ENCODE measurements at regions of chr11 and their contacts with region 1.

Region 1: DNA sequence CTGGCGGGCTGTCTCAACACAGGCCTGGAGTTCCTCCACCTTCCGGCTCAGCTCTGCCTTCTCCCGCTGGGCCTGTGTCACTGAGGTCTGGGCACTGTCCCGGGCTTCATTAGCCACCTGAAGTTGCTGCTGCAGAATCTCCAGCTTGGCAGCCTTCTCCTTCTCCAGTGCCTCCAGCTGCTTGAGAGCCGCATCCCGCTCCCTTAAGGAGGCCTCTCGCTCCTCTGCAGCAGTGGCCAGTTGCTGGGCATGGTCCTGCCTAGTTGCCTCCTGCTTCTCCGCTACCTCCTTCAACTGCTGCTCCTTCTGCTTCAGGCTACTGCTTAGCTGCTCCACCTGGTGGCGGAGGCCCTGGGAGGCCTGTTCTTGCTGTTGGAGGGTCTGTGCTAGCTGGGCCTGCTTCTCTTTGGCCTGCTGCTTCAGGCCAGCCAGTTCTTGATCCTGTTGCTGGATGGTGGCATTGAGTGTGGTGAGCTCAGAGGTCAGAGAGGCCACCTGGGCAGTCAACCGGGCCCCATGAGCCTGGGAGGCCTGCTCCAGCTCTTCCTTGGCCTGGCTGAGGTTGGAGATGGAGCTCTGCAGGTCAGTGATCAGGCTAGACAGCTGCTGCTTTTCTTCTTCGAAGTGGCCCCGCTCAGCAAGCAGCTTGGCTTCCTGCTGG is 16.9 kb downstream of the IL18BP start:
- DNase-seq: no peak
- ATAC-seq: peak; percentile 48; the same call in 1 of the 2 replicates
- H3K4me3 ChIP-seq: no peak overlapping the region
- H3K27ac ChIP-seq: no peak overlapping the region
- H3K4me1 ChIP-seq: no peaks in the 10 kb centered on the region
- H3K27me3 ChIP-seq: no peaks in the 10 kb centered on the region
- CTCF ChIP-seq: peak; percentile 44; the same call in 1 of the 2 replicates

Region 2: DNA sequence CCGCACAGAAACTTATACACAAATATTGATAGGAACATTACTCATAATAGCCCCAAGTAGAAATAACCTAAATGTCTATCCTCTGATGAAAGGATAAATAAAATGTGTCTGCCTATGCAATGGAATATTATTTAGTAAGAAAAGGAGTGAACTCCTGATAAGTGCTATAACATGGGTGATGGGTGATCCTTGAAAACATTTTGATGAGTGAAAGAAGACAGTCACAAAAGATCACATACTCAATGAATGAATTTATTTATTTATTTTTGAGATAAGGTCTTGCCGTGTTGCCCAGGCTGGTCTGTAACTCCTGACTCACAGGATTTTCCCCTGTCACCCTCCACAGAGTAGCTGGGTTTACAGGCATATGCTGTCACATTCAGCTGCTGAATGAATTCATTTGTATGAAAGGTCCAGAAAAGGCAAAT is 69.5 kb before region 1 on chr11:
- CTCF ChIA-PET with region 1: interaction called, 11 read pairs
- POLR2A ChIA-PET with region 1: no interaction called
- in situ Hi-C with region 1: no loop called
- intact Hi-C with region 1: no loop called
- DNase-seq: no peak
- ATAC-seq: peak; percentile 87
- H3K4me3 ChIP-seq: no peak overlapping the region
- H3K27ac ChIP-seq: no peak overlapping the region; the same call in 1 of the 2 replicates
- H3K4me1 ChIP-seq: peaks cover 40% of the 10 kb centered on the region
- H3K27me3 ChIP-seq: no peaks in the 10 kb centered on the region
- CTCF ChIP-seq: no peak

Region 3: DNA sequence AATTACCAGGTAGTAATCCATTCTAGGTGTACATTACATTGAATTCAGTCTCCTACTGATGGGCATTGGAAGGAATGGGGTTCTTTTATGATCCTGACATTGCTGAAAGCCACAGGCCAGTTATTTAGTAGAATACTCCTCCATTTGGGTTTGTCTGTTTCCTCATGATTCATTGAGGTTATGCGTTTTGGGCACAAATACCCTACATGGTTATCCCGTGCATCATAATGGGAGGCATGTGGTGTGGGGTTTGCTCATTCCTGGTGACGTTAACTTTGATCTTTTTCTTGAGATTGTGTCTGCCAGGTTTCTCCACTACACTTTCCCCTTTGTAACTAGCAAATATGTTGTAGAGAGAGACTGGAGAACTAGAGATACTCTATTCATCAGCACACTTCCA is 125.4 kb after region 1 on chr11:
- CTCF ChIA-PET with region 1: no interaction called
- POLR2A ChIA-PET with region 1: no interaction called
- in situ Hi-C with region 1: no loop called
- intact Hi-C with region 1: no loop called
- DNase-seq: no peak
- ATAC-seq: no peak
- H3K4me3 ChIP-seq: no peak overlapping the region
- H3K27ac ChIP-seq: no peak overlapping the region
- H3K4me1 ChIP-seq: no peaks in the 10 kb centered on the region
- H3K27me3 ChIP-seq: peaks cover 4% of the 10 kb centered on the region; the same call in 1 of the 2 replicates
- CTCF ChIP-seq: no peak

Region 4: DNA sequence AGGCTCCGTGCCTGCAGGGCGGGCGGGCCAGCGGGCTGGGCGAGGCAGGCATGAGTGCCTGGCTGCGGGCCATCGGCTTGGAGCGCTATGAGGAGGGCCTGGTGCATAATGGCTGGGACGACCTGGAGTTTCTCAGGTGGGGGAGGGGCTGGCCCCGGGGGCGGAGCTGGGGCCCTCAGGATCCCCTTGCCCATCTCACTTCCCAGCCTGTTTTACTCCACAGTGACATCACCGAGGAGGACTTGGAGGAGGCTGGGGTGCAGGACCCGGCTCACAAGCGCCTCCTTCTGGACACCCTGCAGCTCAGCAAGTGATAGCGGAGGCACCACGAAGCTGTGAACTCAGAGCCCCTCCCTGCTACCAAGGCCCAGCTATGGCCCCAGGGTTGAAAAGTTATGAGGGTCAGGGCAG is 222.4 kb after region 1 on chr11:
- CTCF ChIA-PET with region 1: no interaction called
- POLR2A ChIA-PET with region 1: no interaction called
- in situ Hi-C with region 1: no loop called
- intact Hi-C with region 1: no loop called
- DNase-seq: peak; percentile 27
- ATAC-seq: peak; percentile 69
- H3K4me3 ChIP-seq: no peak overlapping the region
- H3K27ac ChIP-seq: no peak overlapping the region
- H3K4me1 ChIP-seq: peaks cover 15% of the 10 kb centered on the region
- H3K27me3 ChIP-seq: no peaks in the 10 kb centered on the region
- CTCF ChIP-seq: peak; percentile 96